ENCODE measurements at regions of chr12 and their contacts with region 1.

Region 1: GRCh38 chr12:89461649-89462612 is 62.7 kb downstream of the GALNT4 start:
- DNase-seq: peak; percentile 36
- H3K4me3 ChIP-seq: peak overlapping the region in 1 of 2 experiments; percentile 20; a peak in 1 of 4 replicates
- H3K27ac ChIP-seq: peak overlapping the region; percentile 23 to 64; a peak in 3 of 4 replicates
- H3K4me1 ChIP-seq: peaks cover 9 to 11% of the 10 kb centered on the region in 2 experiments; a peak in 3 of 4 replicates
- H3K27me3 ChIP-seq: no peaks in the 10 kb centered on the region
- CTCF ChIP-seq: peak; percentile 68
- EP300 ChIP-seq: no peak
- RAD21 ChIP-seq: peak; percentile 94

Region 2: GRCh38 chr12:89038831-89039512 is 423.0 kb before region 1 on chr12:
- CTCF ChIA-PET with region 1: interaction called, 45 read pairs
- POLR2A ChIA-PET with region 1: interaction called, 3 read pairs
- DNase-seq: no peak
- H3K4me3 ChIP-seq: no peak overlapping the region
- H3K27ac ChIP-seq: peak overlapping the region in 1 of 2 experiments; percentile 67; a peak in 2 of 4 replicates
- H3K4me1 ChIP-seq: peaks cover 6 to 7% of the 10 kb centered on the region in 2 experiments; a peak in 2 of 4 replicates
- H3K27me3 ChIP-seq: no peaks in the 10 kb centered on the region
- CTCF ChIP-seq: no peak
- EP300 ChIP-seq: no peak
- RAD21 ChIP-seq: no peak

Region 3: GRCh38 chr12:89051065-89051677 is 410.8 kb before region 1 on chr12:
- CTCF ChIA-PET with region 1: interaction called, 64 read pairs
- POLR2A ChIA-PET with region 1: no interaction called
- DNase-seq: peak; percentile 61
- H3K4me3 ChIP-seq: no peak overlapping the region
- H3K27ac ChIP-seq: peak overlapping the region in 1 of 2 experiments; percentile 0; a peak in 2 of 4 replicates
- H3K4me1 ChIP-seq: peaks cover 3 to 10% of the 10 kb centered on the region in 2 experiments; a peak in 3 of 4 replicates
- H3K27me3 ChIP-seq: no peaks in the 10 kb centered on the region
- CTCF ChIP-seq: peak; percentile 93
- EP300 ChIP-seq: 0 out of 4 replicates have a peak, but pooled peaks of 1 of the 2 experiments have one; percentile 35
- RAD21 ChIP-seq: peak; percentile 99

Region 4: DNA sequence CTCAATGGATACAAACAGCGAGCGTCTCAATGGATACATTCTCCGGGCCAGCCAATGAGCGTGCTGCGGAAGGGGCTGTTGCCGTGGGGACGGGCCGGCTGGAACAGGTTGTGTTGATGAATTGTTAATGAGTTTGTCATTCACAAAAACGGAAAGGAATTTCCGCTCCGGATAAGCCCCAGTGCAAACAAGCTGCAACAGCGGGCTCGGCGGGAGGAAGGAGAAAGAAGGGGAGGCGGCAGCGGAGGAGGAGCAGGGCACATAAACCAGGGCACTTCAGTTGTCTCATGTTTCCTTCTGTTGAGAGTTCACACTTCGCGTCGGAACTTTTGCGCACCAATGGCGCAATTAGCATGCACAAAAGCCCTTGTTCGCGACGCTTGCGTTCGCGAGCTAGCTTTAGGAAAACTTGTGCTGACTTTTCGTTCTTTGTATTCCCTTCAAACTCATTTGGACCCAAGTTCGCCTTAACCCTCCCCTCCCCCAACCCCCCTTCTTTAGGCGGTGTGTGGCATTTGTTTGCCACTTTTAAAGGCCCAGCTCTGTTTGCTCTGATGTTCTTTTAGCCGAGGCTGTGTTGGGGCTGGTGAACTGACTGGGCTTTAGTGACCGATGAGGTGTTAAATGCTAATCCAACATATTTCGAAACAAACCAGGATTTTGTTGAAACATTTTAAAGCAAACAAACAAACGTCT is 109.3 kb before region 1 on chr12 and contains the start of gene DUSP6:
- CTCF ChIA-PET with region 1: interaction called, 14 read pairs
- POLR2A ChIA-PET with region 1: interaction called, 8 read pairs
- DNase-seq: peak; percentile 93
- H3K4me3 ChIP-seq: peak within 1 kb of the TSS; percentile 94 to 99
- H3K27ac ChIP-seq: peak within 1 kb of the TSS; percentile 98 to 100
- H3K4me1 ChIP-seq: peaks cover 22 to 43% of the 10 kb centered on the region in 2 experiments; a peak in 3 of 4 replicates
- H3K27me3 ChIP-seq: no peaks in the 10 kb centered on the region
- CTCF ChIP-seq: no peak
- EP300 ChIP-seq: peak; percentile 75 to 78; a peak in 2 of 4 replicates
- RAD21 ChIP-seq: no peak
- polyA plus RNA-seq, gene DUSP6: 64.8 and 71.4 TPM in 2 replicates

Region 5: DNA sequence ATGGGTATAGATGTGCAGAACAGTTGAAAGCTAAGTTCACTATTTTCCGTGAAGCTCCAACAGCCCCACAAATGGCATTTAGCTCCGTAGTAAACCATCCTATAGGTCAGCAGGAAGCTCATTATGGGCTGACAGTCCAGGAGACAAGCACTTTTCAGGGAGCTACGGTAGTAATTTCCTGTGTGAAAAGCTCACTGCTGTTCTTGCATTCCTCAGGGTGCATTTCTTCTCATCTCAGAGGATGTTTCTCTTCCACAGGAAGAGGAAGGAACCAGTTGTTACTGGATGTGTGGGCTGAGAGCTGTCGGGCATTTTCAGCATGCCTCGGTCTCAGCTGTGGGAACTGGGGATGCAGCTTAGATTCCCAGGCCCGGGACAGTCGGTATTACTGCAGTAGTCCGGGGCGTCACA is 10.1 kb before region 1 on chr12:
- CTCF ChIA-PET with region 1: interaction called, 15 read pairs
- POLR2A ChIA-PET with region 1: no interaction called
- DNase-seq: no peak
- H3K4me3 ChIP-seq: no peak overlapping the region
- H3K27ac ChIP-seq: peak overlapping the region; percentile 87
- H3K4me1 ChIP-seq: peaks cover 18 to 60% of the 10 kb centered on the region in 2 experiments; a peak in 3 of 4 replicates
- H3K27me3 ChIP-seq: no peaks in the 10 kb centered on the region
- CTCF ChIP-seq: no peak
- EP300 ChIP-seq: no peak
- RAD21 ChIP-seq: no peak

Region 6: DNA sequence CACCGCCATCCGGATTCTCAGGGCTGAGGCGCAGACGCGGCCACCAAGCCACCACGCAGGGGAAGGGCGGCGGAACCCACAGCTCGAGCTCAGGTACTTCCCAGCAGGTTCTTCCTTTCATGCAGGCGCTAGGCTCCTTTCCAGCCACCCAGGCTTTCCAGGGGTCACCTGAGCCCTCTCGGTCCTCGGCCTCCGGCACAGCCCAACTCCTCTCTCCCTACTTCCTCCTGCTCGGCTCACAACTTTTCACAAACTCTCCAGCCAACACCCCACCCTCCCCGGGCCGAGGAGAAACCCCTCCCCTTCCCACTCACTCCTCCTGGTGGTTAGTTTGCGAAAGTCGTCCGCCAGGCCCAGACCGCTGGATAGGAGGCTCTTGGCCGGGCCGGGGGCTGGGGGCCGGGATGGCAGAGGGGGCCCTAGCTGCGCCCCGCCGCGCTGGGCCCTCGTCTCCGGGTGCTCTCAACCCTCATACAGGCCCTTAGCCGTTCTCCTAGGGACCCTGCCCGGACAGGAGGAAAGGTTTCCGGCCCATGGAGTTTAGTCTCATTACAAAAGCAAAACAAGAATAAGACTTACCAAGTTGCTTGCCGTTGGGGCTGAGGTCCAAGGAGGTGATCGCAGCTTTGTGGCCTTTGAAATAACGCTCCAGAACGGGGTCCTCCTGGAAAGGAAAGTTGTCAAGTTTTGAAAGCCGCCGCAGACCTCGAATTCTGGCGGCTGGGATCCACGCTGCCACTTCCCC is 62.8 kb after region 1 on chr12 and contains the start of gene GALNT4:
- CTCF ChIA-PET with region 1: interaction called, 50 read pairs
- POLR2A ChIA-PET with region 1: no interaction called
- DNase-seq: peak; percentile 93
- H3K4me3 ChIP-seq: peak within 1 kb of the TSS; percentile 97 to 99
- H3K27ac ChIP-seq: peak within 1 kb of the TSS; percentile 81 to 95
- H3K4me1 ChIP-seq: peaks cover 12 to 26% of the 10 kb centered on the region in 2 experiments
- H3K27me3 ChIP-seq: no peaks in the 10 kb centered on the region
- CTCF ChIP-seq: peak; percentile 72
- EP300 ChIP-seq: no peak
- RAD21 ChIP-seq: peak; percentile 59
- polyA plus RNA-seq, gene GALNT4: 1.1 and 1.4 TPM in 2 replicates

Measured in SK-N-SH (cell line).